Naive thymus-derived CD4-positive, alpha-beta T cell (primary cell): ENCODE measurements at regions of chr4 and their contacts with region 1.

Region 1: GRCh38 chr4:25913851-25914669 is at the start of gene SMIM20:
- DNase-seq: peak; percentile 84 to 92 (median 90)
- ATAC-seq: peak; percentile 98
- H3K4me3 ChIP-seq: peak within 1 kb of the TSS; percentile 86
- H3K4me3 Mint-ChIP-seq: peak within 1 kb of the TSS; percentile 88 to 99 (median 96)
- H3K27ac ChIP-seq: peak within 1 kb of the TSS; percentile 82
- H3K27ac Mint-ChIP-seq: peak within 1 kb of the TSS; percentile 95 to 99 (median 98)
- H3K4me1 ChIP-seq: peaks cover 11 to 16% of the 10 kb centered on the region in 2 donors
- H3K4me1 Mint-ChIP-seq: peaks cover 13 to 27% (median 19%) of the 10 kb centered on the region in 7 donors
- H3K27me3 ChIP-seq: no peaks in the 10 kb centered on the region
- H3K27me3 Mint-ChIP-seq: peaks cover 0 to 7% (median 0%) of the 10 kb centered on the region in 5 donors
- total RNA-seq, gene SMIM20: 11.6 to 22.8 (median 14.5) TPM

Region 2: GRCh38 chr4:24584175-24584850 is 1329.7 kb before region 1 on chr4 and contains the start of gene DHX15:
- CTCF ChIA-PET with region 1: no interaction called
- POLR2A ChIA-PET with region 1: no interaction called
- intact Hi-C with region 1: loop called (anchors 1 to 5 kb)
- DNase-seq: peak; percentile 87 to 93 (median 91)
- ATAC-seq: peak; percentile 98
- H3K4me3 ChIP-seq: peak within 1 kb of the TSS; percentile 94
- H3K4me3 Mint-ChIP-seq: peak within 1 kb of the TSS; percentile 89 to 100 (median 98)
- H3K27ac ChIP-seq: peak within 1 kb of the TSS; percentile 94
- H3K27ac Mint-ChIP-seq: peak within 1 kb of the TSS; percentile 88 to 99 (median 97)
- H3K4me1 ChIP-seq: peaks cover 24 to 32% of the 10 kb centered on the region in 2 donors
- H3K4me1 Mint-ChIP-seq: peaks cover 28 to 50% (median 39%) of the 10 kb centered on the region in 7 donors
- H3K27me3 ChIP-seq: no peaks in the 10 kb centered on the region
- H3K27me3 Mint-ChIP-seq: no peaks in the 10 kb centered on the region
- total RNA-seq, gene DHX15: 137 to 186 (median 139) TPM

Region 3: DNA sequence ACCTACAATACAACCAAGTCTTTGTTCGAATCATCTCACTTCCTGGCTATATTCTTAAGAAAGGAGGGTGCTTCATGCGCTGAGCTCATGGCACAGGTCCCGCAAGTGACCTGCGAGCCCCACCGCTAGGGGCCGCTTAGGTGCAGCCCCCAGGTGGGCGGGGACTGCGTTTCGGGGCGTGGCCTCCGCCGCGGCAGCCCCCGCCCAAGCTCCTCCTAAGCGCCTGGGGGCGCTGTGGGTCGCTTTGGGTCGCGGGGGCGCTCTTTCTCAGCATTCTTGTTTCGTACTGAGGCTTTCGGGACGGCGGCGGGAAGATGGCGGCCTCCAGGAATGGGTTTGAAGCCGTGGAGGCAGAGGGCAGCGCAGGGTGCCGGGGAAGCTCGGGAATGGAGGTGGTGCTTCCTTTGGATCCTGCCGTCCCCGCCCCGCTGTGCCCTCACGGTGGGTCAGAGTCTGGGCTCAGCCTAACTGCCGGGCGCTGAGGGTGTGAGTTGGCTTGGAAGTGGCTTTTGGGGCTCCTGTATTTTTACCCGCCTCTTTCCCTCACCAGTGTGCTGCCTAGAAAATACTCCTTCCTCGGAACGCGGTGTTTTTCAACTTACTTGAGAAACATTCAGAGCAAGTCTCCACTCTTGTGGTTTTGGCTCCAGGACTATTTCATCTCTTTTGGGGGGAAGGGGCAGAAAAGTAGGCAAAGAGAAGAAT is 601.4 kb before region 1 on chr4 and contains the start of gene ZCCHC4:
- CTCF ChIA-PET with region 1: no interaction called
- POLR2A ChIA-PET with region 1: no interaction called
- intact Hi-C with region 1: loop called (anchors 1 kb)
- DNase-seq: peak; percentile 83 to 99 (median 92)
- ATAC-seq: peak; percentile 100
- H3K4me3 ChIP-seq: peak within 1 kb of the TSS; percentile 80
- H3K4me3 Mint-ChIP-seq: peak within 1 kb of the TSS; percentile 91 to 100 (median 98)
- H3K27ac ChIP-seq: peak within 1 kb of the TSS; percentile 71
- H3K27ac Mint-ChIP-seq: peak within 1 kb of the TSS; percentile 90 to 98 (median 95)
- H3K4me1 ChIP-seq: peaks cover 5 to 7% of the 10 kb centered on the region in 2 donors
- H3K4me1 Mint-ChIP-seq: peaks cover 11 to 34% (median 29%) of the 10 kb centered on the region in 7 donors
- H3K27me3 ChIP-seq: no peaks in the 10 kb centered on the region
- H3K27me3 Mint-ChIP-seq: peaks cover 0 to 10% (median 4%) of the 10 kb centered on the region in 5 donors
- total RNA-seq, gene ZCCHC4: 9.5 to 15.5 (median 13.6) TPM

Region 4: GRCh38 chr4:25842229-25842845 is 71.7 kb before region 1 on chr4:
- CTCF ChIA-PET with region 1: interaction called, 3 read pairs
- POLR2A ChIA-PET with region 1: no interaction called
- intact Hi-C with region 1: loop called (anchors 1 kb)
- DNase-seq: peak in 7 of 9 donors; percentile 24 to 51 (median 46)
- ATAC-seq: peak; percentile 78
- H3K4me3 ChIP-seq: no peak overlapping the region
- H3K4me3 Mint-ChIP-seq: peak overlapping the region; percentile 1 to 63 (median 40)
- H3K27ac ChIP-seq: no peak overlapping the region
- H3K27ac Mint-ChIP-seq: peak overlapping the region in 4 of 9 donors; percentile 16 to 84 (median 40)
- H3K4me1 ChIP-seq: peaks cover 5 to 14% of the 10 kb centered on the region in 2 donors
- H3K4me1 Mint-ChIP-seq: peaks cover 27 to 55% (median 37%) of the 10 kb centered on the region in 7 donors
- H3K27me3 ChIP-seq: no peaks in the 10 kb centered on the region
- H3K27me3 Mint-ChIP-seq: no peaks in the 10 kb centered on the region

Region 5: DNA sequence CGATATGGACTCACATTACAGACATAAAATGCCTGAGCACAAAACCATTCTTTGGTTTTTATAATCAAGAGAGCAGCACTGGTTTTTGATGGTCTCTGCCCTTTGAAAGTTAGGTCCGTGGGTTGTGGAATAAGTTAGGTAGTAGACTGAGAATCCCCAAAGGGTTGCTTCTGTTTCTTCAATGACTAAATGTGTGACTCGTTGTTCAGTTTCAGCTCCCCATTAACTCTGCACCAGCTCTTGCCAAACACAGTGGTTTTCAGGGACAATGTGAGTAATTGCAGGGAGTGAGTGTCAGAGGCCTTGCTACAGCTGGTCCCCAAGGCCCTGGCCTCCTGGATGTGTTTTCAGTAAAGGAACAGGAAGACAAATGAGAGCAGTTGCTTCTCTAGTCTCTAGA is 24.7 kb after region 1 on chr4:
- CTCF ChIA-PET with region 1: no interaction called
- POLR2A ChIA-PET with region 1: no interaction called
- intact Hi-C with region 1: loop called in 1 of 2 experiments (anchors 2 kb)
- DNase-seq: peak in 1 of 9 donors; percentile 51
- ATAC-seq: no peak
- H3K4me3 ChIP-seq: no peak overlapping the region
- H3K4me3 Mint-ChIP-seq: peak overlapping the region in 1 of 10 donors; percentile 44
- H3K27ac ChIP-seq: no peak overlapping the region
- H3K27ac Mint-ChIP-seq: peak overlapping the region in 1 of 9 donors; percentile 16
- H3K4me1 ChIP-seq: peaks cover 0 to 4% of the 10 kb centered on the region in 2 donors
- H3K4me1 Mint-ChIP-seq: peaks cover 0 to 23% (median 0%) of the 10 kb centered on the region in 7 donors
- H3K27me3 ChIP-seq: no peaks in the 10 kb centered on the region
- H3K27me3 Mint-ChIP-seq: peaks cover 2 to 25% (median 12%) of the 10 kb centered on the region in 5 donors

Region 6: GRCh38 chr4:26105815-26106699 is 192.0 kb after region 1 on chr4:
- CTCF ChIA-PET with region 1: no interaction called
- POLR2A ChIA-PET with region 1: no interaction called
- intact Hi-C with region 1: no loop called
- DNase-seq: no peak
- ATAC-seq: no peak
- H3K4me3 ChIP-seq: no peak overlapping the region
- H3K4me3 Mint-ChIP-seq: no peak overlapping the region
- H3K27ac ChIP-seq: no peak overlapping the region
- H3K27ac Mint-ChIP-seq: no peak overlapping the region
- H3K4me1 ChIP-seq: no peaks in the 10 kb centered on the region
- H3K4me1 Mint-ChIP-seq: peaks cover 0 to 33% (median 0%) of the 10 kb centered on the region in 7 donors
- H3K27me3 ChIP-seq: no peaks in the 10 kb centered on the region
- H3K27me3 Mint-ChIP-seq: peaks cover 3 to 20% (median 13%) of the 10 kb centered on the region in 5 donors

Region 7: GRCh38 chr4:26583865-26584652 is 670.0 kb after region 1 on chr4 and contains the start of gene TBC1D19:
- CTCF ChIA-PET with region 1: no interaction called
- POLR2A ChIA-PET with region 1: no interaction called
- intact Hi-C with region 1: loop called in 1 of 2 experiments (anchors 1 kb)
- DNase-seq: peak; percentile 77 to 92 (median 87)
- ATAC-seq: peak; percentile 96
- H3K4me3 ChIP-seq: peak within 1 kb of the TSS; percentile 83
- H3K4me3 Mint-ChIP-seq: peak within 1 kb of the TSS; percentile 86 to 98 (median 95)
- H3K27ac ChIP-seq: peak within 1 kb of the TSS; percentile 92
- H3K27ac Mint-ChIP-seq: peak within 1 kb of the TSS; percentile 96 to 100 (median 98)
- H3K4me1 ChIP-seq: peaks cover 10 to 11% of the 10 kb centered on the region in 2 donors
- H3K4me1 Mint-ChIP-seq: peaks cover 10 to 51% (median 28%) of the 10 kb centered on the region in 7 donors
- H3K27me3 ChIP-seq: no peaks in the 10 kb centered on the region
- H3K27me3 Mint-ChIP-seq: peaks cover 0 to 5% (median 0%) of the 10 kb centered on the region in 5 donors
- total RNA-seq, gene TBC1D19: 4.9 to 8.7 (median 6.4) TPM